ENCODE measurements at regions of chr9 and their contacts with region 1.

Region 1: GRCh38 chr9:98916660-98917059 is 27.0 kb upstream of the COL15A1 start:
- DNase-seq: peak; percentile 57 to 79
- ATAC-seq: peak; percentile 58 to 83 (median 62)
- H3K4me3 ChIP-seq: no peak overlapping the region
- H3K27ac ChIP-seq: no peak overlapping the region
- H3K4me1 ChIP-seq: peaks cover 5% of the 10 kb centered on the region
- H3K27me3 ChIP-seq: no peaks in the 10 kb centered on the region
- CTCF ChIP-seq: no peak

Region 2: GRCh38 chr9:98873951-98874371 is 42.7 kb before region 1 on chr9:
- intact Hi-C with region 1: loop called in 1 of 2 experiments (anchors 5 kb)
- DNase-seq: peak; percentile 49 to 64
- ATAC-seq: peak in 1 of 4 donors; percentile 30
- H3K4me3 ChIP-seq: no peak overlapping the region
- H3K27ac ChIP-seq: no peak overlapping the region
- H3K4me1 ChIP-seq: no peaks in the 10 kb centered on the region
- H3K27me3 ChIP-seq: peaks cover 0 to 4% (median 0%) of the 10 kb centered on the region in 3 donors
- CTCF ChIP-seq: no peak

Measured in psoas muscle (tissue), 8 donors.